GM13977 (cell line): ENCODE measurements at regions of chr15 and their contacts with region 1.

Region 1: DNA sequence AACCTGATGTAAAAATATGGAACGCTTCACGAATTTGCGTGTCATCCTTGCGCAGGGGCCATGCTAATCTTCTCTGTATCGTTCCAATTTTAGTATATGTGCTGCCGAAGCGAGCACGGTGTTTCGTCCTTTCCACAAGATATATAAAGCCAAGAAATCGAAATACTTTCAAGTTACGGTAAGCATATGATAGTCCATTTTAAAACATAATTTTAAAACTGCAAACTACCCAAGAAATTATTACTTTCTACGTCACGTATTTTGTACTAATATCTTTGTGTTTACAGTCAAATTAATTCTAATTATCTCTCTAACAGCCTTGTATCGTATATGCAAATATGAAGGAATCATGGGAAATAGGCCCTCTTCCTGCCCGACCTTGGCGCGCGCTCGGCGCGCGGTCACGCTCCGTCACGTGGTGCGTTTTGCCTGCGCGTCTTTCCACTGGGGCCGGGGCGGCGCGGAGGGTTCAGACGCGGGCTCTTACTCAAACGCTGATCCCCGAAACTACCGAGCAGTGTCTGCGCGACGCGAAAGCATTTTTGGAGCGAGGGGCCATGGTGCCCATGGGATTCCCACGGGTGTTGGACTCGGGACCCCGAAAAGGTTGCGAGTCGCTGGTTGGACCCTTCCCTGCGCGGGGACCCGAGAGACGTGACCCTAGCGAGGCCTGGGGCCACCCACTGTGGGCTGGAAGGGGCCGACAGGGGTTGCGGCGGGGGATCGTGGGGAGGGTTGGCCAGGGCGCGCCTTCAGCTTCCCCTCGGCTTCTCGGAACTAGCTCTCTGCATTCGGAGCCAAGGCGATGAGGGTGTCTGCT is at the start of gene RNU6-1:
- DNase-seq: peak; percentile 93
- CTCF ChIP-seq: no peak

Region 2: DNA sequence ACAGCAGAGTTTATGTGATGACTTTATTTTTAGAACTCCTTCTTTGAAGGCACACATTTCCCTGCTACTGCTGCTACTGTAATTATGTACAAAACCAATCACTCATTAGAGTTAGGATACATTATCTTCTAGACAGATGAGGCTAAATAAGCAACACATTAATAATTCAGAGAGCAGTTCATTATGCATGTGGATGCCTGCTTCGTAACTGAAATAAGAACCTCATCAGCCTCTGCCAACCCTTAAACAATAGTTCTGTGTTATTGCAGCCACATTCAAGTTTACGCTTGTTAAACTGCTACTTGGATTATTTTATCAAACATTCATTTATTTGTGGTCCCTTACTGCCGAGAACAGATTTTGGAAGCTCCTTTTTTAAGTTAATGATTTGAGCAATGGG is 371.7 kb before region 1 on chr15:
- in situ Hi-C with region 1: loop called (anchors 10 kb)
- DNase-seq: no peak
- CTCF ChIP-seq: no peak

Region 3: GRCh38 chr15:67771189-67771800 is 68.8 kb before region 1 on chr15:
- in situ Hi-C with region 1: no loop called
- DNase-seq: no peak
- CTCF ChIP-seq: no peak